ENCODE measurements at regions of chr2 and their contacts with region 1.

Region 1: DNA sequence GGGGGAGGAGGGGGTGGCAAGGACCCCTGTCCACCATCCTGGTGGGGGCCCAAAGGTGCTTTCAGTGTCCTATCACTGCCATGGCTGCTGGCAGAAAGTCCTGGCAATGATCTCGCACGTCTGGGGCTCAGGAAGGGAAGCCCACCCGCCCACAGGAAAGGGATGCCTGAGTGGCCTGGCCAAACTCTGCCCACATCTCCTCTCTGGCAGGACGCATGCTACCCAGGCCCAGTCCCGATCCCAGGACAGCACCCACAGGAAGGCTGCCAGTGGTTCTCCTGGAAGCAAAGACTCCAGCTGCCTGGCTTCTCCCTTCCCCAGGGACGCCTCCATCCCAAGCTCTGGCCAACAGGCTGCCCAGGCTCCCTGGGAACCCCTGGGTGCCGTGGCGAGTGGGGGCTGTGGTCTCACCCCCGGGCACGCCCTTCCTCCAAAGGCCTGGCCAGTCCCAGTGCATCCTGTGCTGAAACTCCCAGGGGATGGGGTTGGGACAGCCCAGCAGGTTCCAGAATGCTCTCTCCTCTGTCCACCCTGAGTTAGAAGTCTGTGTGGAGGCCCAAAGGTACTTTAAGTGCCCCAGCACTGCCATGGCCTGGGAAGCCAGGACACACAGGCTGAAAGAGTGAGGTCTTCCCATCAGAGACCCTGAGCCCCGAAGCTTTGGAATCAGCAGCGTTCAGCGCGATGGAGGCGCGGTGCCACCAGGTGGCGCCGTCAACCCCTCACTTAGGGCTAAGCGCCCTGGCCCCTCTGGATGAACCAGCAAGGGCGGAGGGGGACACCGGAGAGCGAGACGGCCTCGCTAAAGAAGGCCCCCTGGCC is 29.8 kb upstream of the TAF1B start:
- DNase-seq: no peak

Region 2: DNA sequence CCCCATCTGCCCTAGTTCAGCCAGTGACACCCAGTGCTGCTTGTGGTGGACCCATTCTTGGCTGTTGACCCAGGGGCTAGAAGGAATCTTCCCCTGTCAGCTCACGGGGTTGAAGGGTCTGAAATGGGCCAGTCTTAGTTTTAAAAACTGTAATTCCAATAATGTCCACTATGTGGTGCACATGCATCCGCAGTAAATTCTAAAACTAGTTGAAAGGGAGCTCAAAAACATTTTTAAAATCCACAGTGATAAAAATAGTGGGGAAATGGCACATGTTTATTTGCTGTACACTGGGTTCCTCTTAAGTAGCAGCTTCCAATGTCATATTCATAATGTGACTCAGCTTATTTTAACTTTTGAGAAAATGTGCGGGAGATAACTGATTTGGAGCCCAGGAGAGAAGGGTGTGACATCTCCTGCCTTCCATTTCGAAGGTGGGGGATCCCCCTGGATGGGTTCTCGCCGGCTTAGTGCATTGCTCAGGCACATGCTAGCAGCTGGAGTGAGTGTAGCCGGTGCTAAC is 170.8 kb after region 1 on chr2:
- intact Hi-C with region 1: loop called (anchors 10 kb)
- DNase-seq: peak; percentile 63

Region 3: GRCh38 chr2:10097352-10098148 is 284.0 kb after region 1 on chr2:
- intact Hi-C with region 1: loop called (anchors 5 kb)
- DNase-seq: peak; percentile 90